Activated CD4-positive, alpha-beta T cell treated with anti-CD3 and anti-CD28 coated beads for 36 hours (primary cell): ENCODE measurements at regions of chr10 and their contacts with region 1.

Region 1: DNA sequence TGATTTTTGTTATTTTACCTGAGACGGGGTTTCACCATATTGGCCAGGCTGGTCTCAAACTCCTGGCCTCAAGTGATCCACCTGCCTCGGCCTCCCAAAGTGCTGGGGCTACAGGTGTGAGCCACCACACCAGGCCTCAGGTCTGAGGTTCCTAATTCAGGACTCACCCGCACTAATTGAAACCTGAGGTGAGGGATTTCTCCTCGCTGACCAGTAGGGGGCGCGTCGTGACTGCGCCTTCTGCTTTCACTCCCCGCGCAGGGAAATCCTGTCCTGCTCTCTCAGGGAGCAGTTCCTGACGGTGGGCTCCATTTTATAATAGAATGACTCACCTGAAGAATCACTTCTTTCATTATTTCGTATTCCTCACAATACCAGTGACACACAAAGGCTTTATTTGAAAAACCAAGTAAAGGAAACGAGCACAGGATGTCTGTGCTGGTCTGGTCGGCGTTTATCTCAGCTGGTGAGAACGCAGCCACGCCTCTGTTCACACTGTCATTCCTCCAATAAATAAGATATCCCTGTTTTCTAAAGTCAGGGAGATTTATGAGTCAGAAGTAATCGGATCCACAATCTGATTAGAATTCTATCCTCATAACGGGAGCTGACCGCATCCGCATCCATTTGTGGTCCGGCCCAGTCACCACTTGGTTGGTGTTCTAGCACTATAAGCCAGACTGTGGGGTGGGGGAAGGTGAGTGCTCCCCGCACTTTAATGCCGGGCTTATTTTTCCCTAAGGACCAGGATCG is 35.4 kb downstream of the BAG3 start:
- DNase-seq: peak; percentile 92
- ATAC-seq: peak; percentile 86
- H3K4me3 Mint-ChIP-seq: peak overlapping the region; percentile 46
- H3K27ac Mint-ChIP-seq: peak overlapping the region; percentile 75
- H3K4me1 Mint-ChIP-seq: peaks cover 24% of the 10 kb centered on the region
- H3K27me3 Mint-ChIP-seq: no peaks in the 10 kb centered on the region

Region 2: DNA sequence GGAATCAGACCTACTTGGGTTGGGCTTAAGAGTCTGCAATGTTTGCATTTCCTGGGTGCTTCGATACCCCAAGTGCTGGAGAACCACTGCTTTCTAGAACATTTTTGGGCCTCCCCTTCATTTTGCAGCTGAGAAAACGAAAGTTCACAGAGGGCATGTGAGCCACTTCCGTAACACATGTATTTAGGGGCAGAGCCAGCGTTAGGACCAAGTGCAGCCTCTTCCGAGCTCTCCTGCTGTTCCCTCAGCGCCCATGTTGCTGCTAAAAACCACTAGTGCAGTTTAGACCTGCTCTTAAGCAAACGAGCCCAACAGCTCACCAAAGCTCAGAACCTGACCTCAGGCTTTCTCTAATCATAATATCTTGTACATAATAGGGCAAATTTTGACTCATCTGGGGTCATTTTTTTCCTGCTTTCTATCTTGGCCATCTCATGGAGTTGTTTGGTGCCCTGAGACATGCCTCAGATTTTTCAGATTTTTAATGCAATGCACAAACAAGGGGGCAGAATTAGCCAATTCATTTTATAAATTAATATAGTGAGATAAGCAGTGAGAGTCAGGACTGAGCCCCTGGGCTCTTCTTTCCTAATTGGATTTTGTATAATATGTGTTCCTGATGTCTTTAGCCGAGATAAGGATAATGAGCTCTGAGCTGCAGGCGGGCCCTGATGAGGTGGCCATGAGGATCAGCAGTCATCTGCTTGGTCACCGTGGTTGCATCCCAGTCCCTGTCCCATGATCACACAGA is 22.6 kb before region 1 on chr10:
- CTCF ChIA-PET with region 1: interaction called, 11 read pairs
- POLR2A ChIA-PET with region 1: no interaction called
- intact Hi-C with region 1: no loop called
- DNase-seq: peak; percentile 56
- ATAC-seq: peak; percentile 89
- H3K4me3 Mint-ChIP-seq: peak overlapping the region; percentile 58
- H3K27ac Mint-ChIP-seq: peak overlapping the region; percentile 84
- H3K4me1 Mint-ChIP-seq: peaks cover 75% of the 10 kb centered on the region
- H3K27me3 Mint-ChIP-seq: no peaks in the 10 kb centered on the region

Region 3: DNA sequence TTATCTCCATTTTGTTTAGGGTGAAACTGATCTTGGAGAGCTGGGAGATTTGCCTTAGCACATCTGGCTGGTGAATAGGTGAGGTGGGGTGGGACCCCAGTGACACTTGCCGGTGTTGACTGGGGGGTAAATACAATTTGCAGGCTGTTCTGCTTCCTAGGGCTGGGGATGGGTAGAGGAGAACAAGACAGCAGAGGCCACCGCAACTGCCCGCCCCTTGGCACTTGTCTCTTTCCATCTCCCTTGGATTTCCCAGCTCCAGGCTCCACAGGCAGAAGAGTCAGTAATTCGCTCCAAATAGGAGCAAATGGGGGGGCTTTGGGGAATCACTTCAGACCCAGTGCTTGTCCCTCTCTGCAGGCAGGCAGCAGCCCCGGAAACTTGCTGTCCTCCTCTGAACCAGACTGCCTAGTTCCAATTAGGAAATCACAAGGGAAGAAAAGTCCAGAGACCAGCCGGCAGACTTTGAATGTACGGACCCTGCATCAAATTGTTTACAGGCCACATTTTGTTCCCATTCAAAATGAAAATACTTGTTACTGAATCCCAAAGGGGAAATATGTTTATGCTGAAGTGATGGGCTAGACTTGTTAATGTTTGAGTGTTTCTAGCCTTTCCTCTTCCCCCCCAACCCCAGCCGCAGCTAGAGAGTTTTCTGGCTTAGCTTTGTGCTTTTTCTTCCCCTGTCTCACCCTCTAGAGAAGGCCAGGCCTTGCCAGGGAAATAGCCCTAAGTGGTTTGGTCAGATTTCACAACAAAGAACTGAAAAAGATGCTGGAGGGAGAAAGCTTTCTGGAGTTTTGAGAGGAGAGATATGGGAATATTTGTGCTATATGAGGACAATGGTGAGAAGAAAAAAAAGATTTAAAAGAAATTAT is 29.3 kb after region 1 on chr10:
- CTCF ChIA-PET with region 1: interaction called, 12 read pairs
- POLR2A ChIA-PET with region 1: no interaction called
- intact Hi-C with region 1: no loop called
- DNase-seq: no peak
- ATAC-seq: no peak
- H3K4me3 Mint-ChIP-seq: no peak overlapping the region
- H3K27ac Mint-ChIP-seq: no peak overlapping the region
- H3K4me1 Mint-ChIP-seq: peaks cover 10% of the 10 kb centered on the region
- H3K27me3 Mint-ChIP-seq: no peaks in the 10 kb centered on the region

Region 4: GRCh38 chr10:119750391-119751230 is 64.0 kb after region 1 on chr10:
- CTCF ChIA-PET with region 1: interaction called, 37 read pairs
- POLR2A ChIA-PET with region 1: no interaction called
- intact Hi-C with region 1: loop called (anchors 1 kb)
- DNase-seq: peak; percentile 78
- ATAC-seq: peak; percentile 94
- H3K4me3 Mint-ChIP-seq: peak overlapping the region; percentile 5
- H3K27ac Mint-ChIP-seq: peak overlapping the region; percentile 71
- H3K4me1 Mint-ChIP-seq: peaks cover 7% of the 10 kb centered on the region
- H3K27me3 Mint-ChIP-seq: no peaks in the 10 kb centered on the region

Region 5: GRCh38 chr10:119859420-119860258 is 173.0 kb after region 1 on chr10:
- CTCF ChIA-PET with region 1: interaction called, 37 read pairs
- POLR2A ChIA-PET with region 1: no interaction called
- intact Hi-C with region 1: loop called (anchors 1 kb)
- DNase-seq: no peak
- ATAC-seq: no peak
- H3K4me3 Mint-ChIP-seq: no peak overlapping the region
- H3K27ac Mint-ChIP-seq: no peak overlapping the region
- H3K4me1 Mint-ChIP-seq: peaks cover 46% of the 10 kb centered on the region
- H3K27me3 Mint-ChIP-seq: no peaks in the 10 kb centered on the region